ENCODE measurements at regions of chr5 and their contacts with region 1.

Region 1: DNA sequence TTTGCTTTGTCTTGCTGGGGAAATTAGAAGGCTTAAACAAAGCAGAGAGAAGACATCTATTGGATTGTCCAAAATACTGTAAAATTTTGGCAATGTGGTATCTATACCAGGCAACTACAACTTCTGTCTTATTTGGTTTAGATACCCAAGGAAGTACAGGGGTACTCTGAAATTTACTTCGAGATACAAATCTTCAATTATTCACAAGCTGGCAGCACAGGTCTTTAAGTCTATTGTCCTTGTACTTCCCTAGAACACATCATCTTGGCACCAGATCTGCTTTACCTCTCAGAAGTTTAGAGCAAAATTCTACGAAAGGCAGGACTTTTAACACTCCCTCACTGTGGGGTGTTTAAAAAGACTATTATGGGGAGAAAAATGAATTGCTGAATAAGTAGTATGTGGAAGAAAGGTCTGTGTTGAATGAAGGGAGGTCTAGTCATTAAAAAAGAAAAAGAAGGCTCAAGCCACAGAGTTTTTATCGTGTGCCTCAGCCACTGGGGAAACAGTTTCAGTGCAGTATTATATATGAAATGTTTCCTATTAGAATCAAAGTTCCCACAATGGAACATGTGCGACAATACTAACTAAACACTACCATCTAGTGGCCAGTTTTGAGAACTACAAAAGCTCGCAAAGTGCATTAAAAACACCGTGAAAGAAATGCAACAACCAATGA is 93.7 kb downstream of the PDE4D start:
- DNase-seq: no peak
- H3K4me3 ChIP-seq: peak overlapping the region in 1 of 4 donors; percentile 26
- H3K27ac ChIP-seq: peak overlapping the region; percentile 67 to 75 (median 72)
- H3K4me1 ChIP-seq: peaks cover 0 to 21% (median 17%) of the 10 kb centered on the region in 4 donors
- H3K27me3 ChIP-seq: no peaks in the 10 kb centered on the region
- CTCF ChIP-seq: peak; percentile 77 to 84 (median 81)
- EP300 ChIP-seq: no peak
- POLR2A ChIP-seq: no peak

Region 2: GRCh38 chr5:59188419-59189225 is 611.2 kb before region 1 on chr5:
- in situ Hi-C with region 1: loop called in 3 of 4 experiments (anchors 25 kb)
- intact Hi-C with region 1: loop called (anchors 10 kb)
- DNase-seq: peak; percentile 69
- H3K4me3 ChIP-seq: peak overlapping the region in 1 of 4 donors; percentile 28
- H3K27ac ChIP-seq: peak overlapping the region; percentile 42 to 74 (median 57)
- H3K4me1 ChIP-seq: peaks cover 0 to 27% (median 6%) of the 10 kb centered on the region in 4 donors
- H3K27me3 ChIP-seq: no peaks in the 10 kb centered on the region
- CTCF ChIP-seq: peak; percentile 71 to 95 (median 87)
- EP300 ChIP-seq: no peak
- POLR2A ChIP-seq: no peak

Region 3: GRCh38 chr5:59390074-59390659 is 409.6 kb before region 1 on chr5:
- in situ Hi-C with region 1: loop called (anchors 5 to 25 kb)
- intact Hi-C with region 1: loop called (anchors 2 kb)
- DNase-seq: no peak
- H3K4me3 ChIP-seq: no peak overlapping the region
- H3K27ac ChIP-seq: no peak overlapping the region
- H3K4me1 ChIP-seq: peaks cover 0 to 9% (median 0%) of the 10 kb centered on the region in 4 donors
- H3K27me3 ChIP-seq: no peaks in the 10 kb centered on the region
- CTCF ChIP-seq: peak; percentile 57 to 79 (median 73)
- EP300 ChIP-seq: no peak
- POLR2A ChIP-seq: no peak

Region 4: GRCh38 chr5:59673438-59674058 is 126.3 kb before region 1 on chr5:
- in situ Hi-C with region 1: loop called in 2 of 4 experiments (anchors 10 kb)
- intact Hi-C with region 1: no loop called
- DNase-seq: no peak
- H3K4me3 ChIP-seq: no peak overlapping the region
- H3K27ac ChIP-seq: no peak overlapping the region
- H3K4me1 ChIP-seq: peaks cover 0 to 6% (median 0%) of the 10 kb centered on the region in 4 donors
- H3K27me3 ChIP-seq: no peaks in the 10 kb centered on the region
- CTCF ChIP-seq: peak; percentile 77 to 87 (median 83)
- EP300 ChIP-seq: no peak
- POLR2A ChIP-seq: no peak

Region 5: DNA sequence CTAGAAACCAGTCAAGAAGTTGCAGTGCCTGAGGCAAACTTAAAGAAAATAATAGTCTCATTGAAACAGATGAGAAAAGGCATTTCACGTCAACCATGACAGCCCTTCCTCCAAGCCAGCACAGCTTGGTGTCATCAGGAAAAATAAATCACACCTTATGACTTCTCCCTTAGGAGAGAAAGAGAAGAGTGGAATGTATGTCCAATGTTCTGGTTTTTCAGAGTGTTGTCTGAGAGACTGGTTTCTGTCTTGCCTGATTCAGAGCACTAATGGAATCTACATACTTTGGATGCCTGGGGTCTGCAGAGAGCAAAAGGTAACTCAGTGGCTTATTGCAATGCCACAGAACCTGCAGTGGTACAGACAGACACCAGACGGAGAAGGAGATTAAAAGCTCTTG is 199.2 kb after region 1 on chr5:
- in situ Hi-C with region 1: no loop called
- intact Hi-C with region 1: no loop called
- DNase-seq: no peak
- H3K4me3 ChIP-seq: no peak overlapping the region
- H3K27ac ChIP-seq: no peak overlapping the region
- H3K4me1 ChIP-seq: no peaks in the 10 kb centered on the region
- H3K27me3 ChIP-seq: no peaks in the 10 kb centered on the region
- CTCF ChIP-seq: no peak
- EP300 ChIP-seq: no peak
- POLR2A ChIP-seq: no peak

Measured in transverse colon (tissue), 4 donors.